ENCODE measurements at regions of chr2 and their contacts with region 1.

Region 1: DNA sequence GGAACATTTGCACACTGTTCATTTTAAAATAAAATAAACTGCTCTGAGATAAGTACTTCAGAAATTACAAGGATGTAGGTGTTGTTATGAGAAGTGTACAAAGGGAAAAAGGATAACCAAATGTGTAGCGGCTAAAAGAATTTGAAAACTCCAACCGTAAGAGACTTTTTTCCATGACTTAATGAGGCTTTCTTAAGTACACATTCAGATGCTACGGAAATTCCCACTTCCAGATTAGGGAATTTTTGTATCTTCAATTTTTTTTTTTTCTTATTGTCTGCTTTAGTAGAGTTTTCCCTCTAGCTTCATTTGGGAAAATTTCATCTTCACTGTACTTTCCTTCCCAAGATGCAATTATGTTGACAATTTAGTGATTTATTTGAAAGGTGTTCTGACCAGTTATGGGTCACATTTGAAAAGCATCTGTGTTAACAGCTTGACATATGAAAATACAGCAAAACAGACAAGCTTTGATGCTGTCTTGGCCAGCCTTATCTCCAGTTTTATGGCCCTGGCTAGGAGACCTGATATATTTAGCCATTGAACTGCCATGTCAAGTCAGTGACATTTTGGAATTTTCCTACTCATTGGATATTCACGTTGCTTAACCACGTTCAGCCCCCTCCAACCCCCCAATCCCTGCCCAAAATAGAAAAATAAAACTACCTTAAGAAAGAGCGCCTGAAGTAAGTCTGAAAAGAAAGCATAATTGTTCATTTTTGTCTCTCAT is 105.6 kb downstream of the FEZ2 start:
- DNase-seq: no peak
- H3K4me3 ChIP-seq: no peak overlapping the region
- CTCF ChIP-seq: no peak

Region 2: GRCh38 chr2:35454966-35455638 is 1037.3 kb before region 1 on chr2:
- CTCF ChIA-PET with region 1: no interaction called
- POLR2A ChIA-PET with region 1: no interaction called
- DNase-seq: no peak
- H3K4me3 ChIP-seq: no peak overlapping the region
- CTCF ChIP-seq: no peak

Region 3: DNA sequence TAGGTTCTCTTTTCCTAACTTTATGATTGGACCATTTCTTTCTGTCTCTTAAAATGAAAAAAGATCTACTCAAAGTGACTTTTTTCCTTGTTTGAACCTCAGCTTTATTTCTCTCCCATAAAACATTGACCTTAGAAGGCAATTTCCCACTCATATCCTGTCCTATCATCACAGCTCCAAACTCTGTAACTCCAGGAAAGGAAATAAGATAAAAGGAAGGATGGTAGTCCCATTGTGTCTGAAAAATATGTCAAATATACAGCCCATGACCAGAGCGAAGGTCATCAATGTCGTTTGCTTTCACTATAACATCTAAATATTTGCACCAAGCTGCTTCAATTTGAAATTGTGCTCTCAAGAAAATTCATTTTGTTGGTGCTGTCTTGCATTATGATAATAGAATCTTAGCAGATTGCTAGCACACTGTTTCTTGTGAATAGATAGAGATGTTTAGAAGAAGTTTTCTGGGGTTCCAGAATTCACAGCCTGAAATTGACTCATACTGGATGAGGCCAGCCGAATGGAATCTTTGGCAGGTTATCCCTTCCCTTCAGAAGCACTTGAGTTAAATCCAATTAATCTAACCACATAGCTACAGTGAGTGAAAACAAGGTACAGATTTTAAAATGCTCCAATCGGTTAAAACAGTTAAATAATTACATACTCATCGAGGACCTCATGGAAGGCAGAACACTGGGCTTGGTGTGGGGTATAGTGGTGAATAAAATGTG is 41.8 kb before region 1 on chr2:
- CTCF ChIA-PET with region 1: no interaction called
- POLR2A ChIA-PET with region 1: no interaction called
- DNase-seq: peak; percentile 70
- H3K4me3 ChIP-seq: no peak overlapping the region
- CTCF ChIP-seq: no peak

Region 4: DNA sequence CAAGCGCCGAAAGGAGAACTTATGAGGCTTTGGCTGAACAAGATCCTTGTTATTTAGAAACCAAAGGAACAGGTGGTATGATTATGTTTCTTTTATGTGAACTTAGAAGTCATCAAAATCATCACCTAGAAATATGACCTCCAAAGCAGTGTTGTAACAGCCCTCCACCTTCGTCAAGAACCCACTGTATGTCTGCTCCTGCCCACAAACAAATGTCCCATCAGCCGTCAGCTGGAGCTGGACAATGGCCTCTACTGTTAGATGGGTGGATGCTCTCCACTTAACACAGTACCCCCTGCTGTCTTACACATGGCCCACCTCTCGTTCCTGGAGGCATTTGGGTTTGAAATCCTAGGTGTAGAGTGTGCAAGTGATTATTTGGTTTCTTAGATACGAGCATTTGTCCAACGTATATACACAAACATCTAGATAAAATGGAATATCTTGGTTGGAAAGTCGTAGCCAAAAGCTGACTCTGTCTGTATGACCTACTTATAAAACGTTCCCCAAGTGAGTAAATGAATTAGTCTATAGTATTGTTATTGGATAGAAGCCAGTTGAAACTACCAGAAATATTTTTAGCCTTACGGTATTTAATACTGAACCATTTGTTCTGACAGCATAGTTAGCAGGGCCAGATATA is 23.8 kb before region 1 on chr2:
- CTCF ChIA-PET with region 1: no interaction called
- POLR2A ChIA-PET with region 1: no interaction called
- DNase-seq: peak; percentile 69
- H3K4me3 ChIP-seq: no peak overlapping the region
- CTCF ChIP-seq: no peak

Region 5: DNA sequence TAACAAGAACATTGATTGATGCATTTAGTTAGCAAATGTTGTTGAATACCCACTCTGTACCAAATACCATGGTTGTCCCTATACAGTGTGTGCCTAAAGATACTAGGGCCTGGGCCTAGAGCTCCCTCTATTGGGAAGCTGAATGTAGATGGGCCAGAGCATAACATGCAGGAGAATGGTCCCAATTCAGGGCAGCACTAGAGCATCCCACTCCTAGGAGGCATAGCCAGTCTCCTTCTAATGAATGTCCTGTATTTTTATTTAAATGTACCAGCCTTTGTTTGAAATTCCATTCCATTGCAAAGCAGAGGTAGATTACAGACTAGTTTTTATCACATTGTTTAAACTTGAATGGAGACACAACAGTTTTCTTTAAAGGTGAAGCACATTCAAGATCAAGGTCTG is 15.0 kb after region 1 on chr2:
- CTCF ChIA-PET with region 1: interaction called, 13 read pairs
- POLR2A ChIA-PET with region 1: interaction called, 3 read pairs
- DNase-seq: no peak
- H3K4me3 ChIP-seq: no peak overlapping the region
- CTCF ChIP-seq: peak; percentile 77

Measured in AG04449 (cell line).